Activated T-helper 2 cell treated with anti-CD3 and anti-CD28 coated beads, Interferon-gamma antibody, Interleukin-2, Interleukin-4, amounts not matched to agents 10 μg/mL and 5 μg/mL and 100 μg/mL, durations not matched to agents 14 hours and 24 hours and 36 hours (primary cell): ENCODE measurements at regions of chr13 and their contacts with region 1.

Region 1: DNA sequence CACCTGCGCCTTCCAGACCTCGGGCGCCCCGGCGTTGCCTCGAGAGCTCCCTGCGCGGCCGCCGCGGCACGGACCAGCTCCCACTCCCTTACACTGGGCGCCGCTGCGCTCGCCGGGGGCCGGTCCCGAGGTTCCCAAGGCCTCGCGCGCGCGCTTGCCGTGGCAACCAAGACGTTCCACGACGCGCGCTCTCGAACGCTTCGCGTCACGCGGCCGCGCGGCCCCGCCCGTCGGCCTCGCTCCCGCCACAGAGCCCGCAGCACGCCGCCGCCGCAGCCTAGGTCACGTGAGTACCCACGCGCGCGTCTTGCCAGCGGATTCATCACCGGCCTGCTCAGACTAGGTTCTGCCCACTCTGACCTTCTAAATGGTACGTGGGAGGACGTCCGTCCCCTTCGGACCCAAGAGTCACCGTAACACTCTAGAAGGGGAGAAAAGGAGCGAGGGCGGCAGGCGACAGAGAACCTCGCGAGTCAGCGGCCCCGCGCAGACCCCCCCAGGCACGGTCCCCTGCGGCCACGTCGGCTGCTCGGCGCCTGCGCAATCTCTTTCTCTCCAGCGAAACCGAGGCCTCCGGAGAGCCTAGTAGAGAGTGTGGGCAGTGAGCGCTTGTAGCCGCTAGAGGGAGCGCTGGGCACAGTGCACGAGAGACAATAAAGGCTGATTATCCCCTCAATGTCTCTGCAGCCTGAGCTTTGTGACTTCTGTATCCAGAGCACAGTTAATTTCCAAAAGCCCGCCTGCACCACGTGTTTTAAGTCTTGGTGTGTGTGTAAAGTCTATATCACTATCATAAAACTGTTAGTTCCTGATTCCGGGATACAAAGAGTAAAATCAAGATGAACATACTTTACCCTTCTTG is at the start of gene SPART:
- DNase-seq: peak; percentile 82
- H3K4me3 Mint-ChIP-seq: peak within 1 kb of the TSS; percentile 88
- H3K27ac Mint-ChIP-seq: peak within 1 kb of the TSS; percentile 92
- H3K4me1 Mint-ChIP-seq: peaks cover 10% of the 10 kb centered on the region
- H3K27me3 Mint-ChIP-seq: peaks cover 2% of the 10 kb centered on the region
- total RNA-seq, gene SPART: 31.7 and 32.0 TPM in 2 replicates

Region 2: GRCh38 chr13:36297366-36298338 is 48.8 kb before region 1 on chr13 and contains the start of gene CCDC169:
- intact Hi-C with region 1: loop called (anchors 1 kb)
- DNase-seq: peak; percentile 57
- H3K4me3 Mint-ChIP-seq: peak within 1 kb of the TSS; percentile 83
- H3K27ac Mint-ChIP-seq: peak within 1 kb of the TSS; percentile 48
- H3K4me1 Mint-ChIP-seq: peaks cover 8% of the 10 kb centered on the region
- H3K27me3 Mint-ChIP-seq: peaks cover 36% of the 10 kb centered on the region
- total RNA-seq, gene CCDC169: 0.23 and 0.46 TPM in 2 replicates

Region 3: DNA sequence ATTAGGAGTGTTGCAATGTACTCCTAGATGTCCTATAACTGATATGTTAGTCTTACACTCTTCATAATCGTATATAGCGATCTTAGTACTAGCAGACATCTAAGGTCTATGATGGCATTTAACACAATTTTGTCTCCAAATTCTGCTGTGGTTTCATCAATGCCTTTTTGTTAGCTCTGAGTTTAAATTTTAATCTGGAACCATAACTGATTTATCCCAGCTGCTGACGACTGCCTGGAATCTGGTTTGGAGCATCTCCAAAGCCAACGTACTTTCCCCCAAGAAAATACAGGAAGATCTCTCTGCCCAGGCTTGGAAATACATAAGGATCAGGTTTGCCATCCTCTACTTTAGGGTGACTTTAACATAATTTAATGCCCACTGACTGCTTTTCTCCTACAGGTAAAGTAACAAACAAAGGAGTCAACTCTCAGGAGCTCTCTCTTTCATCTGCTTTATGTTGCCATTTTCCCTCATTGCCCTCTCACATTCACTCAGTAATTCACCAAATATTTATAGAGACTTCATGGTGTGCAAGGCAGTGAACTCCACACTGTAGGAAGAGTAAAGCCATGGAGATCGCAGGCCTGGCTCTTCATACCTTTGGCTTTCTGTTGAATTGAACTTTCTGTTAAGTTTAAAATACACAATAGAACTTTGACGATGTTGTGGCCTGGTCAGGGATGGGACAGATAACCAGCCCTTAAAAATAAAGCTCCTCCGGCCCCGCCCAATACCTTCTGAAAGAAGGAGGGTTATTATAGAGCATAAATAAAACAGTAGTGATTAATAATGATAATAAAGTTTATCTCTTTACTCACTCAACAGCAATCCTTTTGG is 23.0 kb after region 1 on chr13:
- intact Hi-C with region 1: no loop called
- DNase-seq: no peak
- H3K4me3 Mint-ChIP-seq: no peak overlapping the region
- H3K27ac Mint-ChIP-seq: no peak overlapping the region
- H3K4me1 Mint-ChIP-seq: no peaks in the 10 kb centered on the region
- H3K27me3 Mint-ChIP-seq: peaks cover 5% of the 10 kb centered on the region

Region 4: DNA sequence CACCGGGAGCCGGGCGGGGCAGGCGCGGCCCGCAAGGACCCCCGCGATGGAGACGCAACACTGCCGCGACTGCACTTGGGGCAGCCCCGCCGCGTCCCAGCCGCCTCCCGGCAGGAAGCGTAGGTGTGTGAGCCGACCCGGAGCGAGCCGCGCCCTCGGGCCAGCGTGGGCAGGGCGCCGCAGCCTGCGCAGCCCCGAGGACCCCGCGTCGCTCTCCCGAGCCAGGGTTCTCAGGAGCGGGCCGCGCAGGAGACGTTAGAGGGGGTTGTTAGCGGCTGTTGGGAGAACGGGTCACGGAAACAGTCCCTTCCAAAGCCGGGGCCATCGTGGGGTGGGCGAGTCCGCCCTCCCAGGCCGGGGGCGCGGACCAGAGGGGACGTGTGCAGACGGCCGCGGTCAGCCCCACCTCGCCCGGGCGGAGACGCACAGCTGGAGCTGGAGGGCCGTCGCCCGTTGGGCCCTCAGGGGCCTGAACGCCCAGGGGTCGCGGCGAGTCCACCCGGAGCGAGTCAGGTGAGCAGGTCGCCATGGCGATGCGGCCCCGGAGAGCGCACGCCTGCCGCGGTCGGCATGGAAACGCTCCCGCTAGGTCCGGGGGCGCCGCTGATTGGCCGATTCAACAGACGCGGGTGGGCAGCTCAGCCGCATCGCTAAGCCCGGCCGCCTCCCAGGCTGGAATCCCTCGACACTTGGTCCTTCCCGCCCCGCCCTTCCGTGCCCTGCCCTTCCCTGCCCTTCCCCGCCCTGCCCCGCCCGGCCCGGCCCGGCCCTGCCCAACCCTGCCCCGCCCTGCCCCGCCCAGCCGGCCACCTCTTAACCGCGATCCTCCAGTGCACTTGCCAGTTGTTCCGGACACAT is 85.4 kb after region 1 on chr13 and contains the start of gene CCNA1:
- intact Hi-C with region 1: loop called (anchors 5 kb)
- DNase-seq: peak; percentile 32
- H3K4me3 Mint-ChIP-seq: peak within 1 kb of the TSS; percentile 74
- H3K27ac Mint-ChIP-seq: no peak within 1 kb of the TSS
- H3K4me1 Mint-ChIP-seq: peaks cover 27% of the 10 kb centered on the region
- H3K27me3 Mint-ChIP-seq: peaks cover 40% of the 10 kb centered on the region
- total RNA-seq, gene CCNA1: 4.3 and 5.0 TPM in 2 replicates

Region 5: GRCh38 chr13:36736119-36736726 is 389.8 kb after region 1 on chr13:
- intact Hi-C with region 1: loop called (anchors 1 kb)
- DNase-seq: no peak
- H3K4me3 Mint-ChIP-seq: no peak overlapping the region
- H3K27ac Mint-ChIP-seq: no peak overlapping the region
- H3K4me1 Mint-ChIP-seq: no peaks in the 10 kb centered on the region
- H3K27me3 Mint-ChIP-seq: peaks cover 2% of the 10 kb centered on the region

Region 6: GRCh38 chr13:36818804-36819738 is 472.6 kb after region 1 on chr13 and contains the start of gene RFXAP:
- intact Hi-C with region 1: loop called (anchors 1 kb)
- DNase-seq: peak; percentile 88
- H3K4me3 Mint-ChIP-seq: peak within 1 kb of the TSS; percentile 90
- H3K27ac Mint-ChIP-seq: peak within 1 kb of the TSS; percentile 89
- H3K4me1 Mint-ChIP-seq: peaks cover 43% of the 10 kb centered on the region
- H3K27me3 Mint-ChIP-seq: peaks cover 18% of the 10 kb centered on the region
- total RNA-seq, gene RFXAP: 10.6 and 13.5 TPM in 2 replicates

Region 7: DNA sequence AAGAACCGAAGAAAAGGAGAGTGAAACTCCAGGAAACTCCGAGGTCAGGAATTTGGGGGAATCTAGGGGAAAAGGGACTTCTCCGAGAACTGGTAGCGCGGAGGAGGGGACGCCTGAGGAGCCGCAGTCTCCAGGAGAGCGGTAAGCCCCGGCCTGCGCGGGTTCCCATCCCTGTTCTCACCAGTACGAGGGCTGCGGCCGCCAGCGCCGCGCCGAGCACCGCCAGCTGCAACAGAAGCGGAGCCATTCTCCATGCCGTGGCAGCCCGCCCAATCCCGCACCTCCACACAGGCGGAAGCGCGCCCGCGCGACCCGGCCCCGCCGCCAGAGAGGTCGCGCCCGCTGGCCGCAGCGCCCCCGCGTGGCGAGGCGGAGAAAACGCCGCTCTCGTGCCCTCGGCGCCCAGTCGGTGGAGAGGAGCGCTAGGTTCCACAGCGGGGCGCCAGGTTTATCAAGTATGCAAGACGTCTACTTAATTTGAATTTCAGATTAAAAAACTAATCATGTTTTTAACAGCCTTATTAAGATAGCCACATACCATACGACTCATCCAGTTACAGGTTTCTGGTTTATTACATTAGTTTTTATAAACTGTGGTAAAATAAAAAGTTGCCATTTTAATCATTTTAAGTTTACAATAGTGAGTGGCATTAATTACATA is 652.7 kb after region 1 on chr13 and contains the start of gene ALG5:
- intact Hi-C with region 1: loop called (anchors 2 kb)
- DNase-seq: peak; percentile 93
- H3K4me3 Mint-ChIP-seq: peak within 1 kb of the TSS; percentile 100
- H3K27ac Mint-ChIP-seq: peak within 1 kb of the TSS; percentile 100
- H3K4me1 Mint-ChIP-seq: peaks cover 37% of the 10 kb centered on the region
- H3K27me3 Mint-ChIP-seq: no peaks in the 10 kb centered on the region
- total RNA-seq, gene ALG5: 45.6 and 49.8 TPM in 2 replicates